ENCODE measurements at regions of chr10 and their contacts with region 1.

Region 1: DNA sequence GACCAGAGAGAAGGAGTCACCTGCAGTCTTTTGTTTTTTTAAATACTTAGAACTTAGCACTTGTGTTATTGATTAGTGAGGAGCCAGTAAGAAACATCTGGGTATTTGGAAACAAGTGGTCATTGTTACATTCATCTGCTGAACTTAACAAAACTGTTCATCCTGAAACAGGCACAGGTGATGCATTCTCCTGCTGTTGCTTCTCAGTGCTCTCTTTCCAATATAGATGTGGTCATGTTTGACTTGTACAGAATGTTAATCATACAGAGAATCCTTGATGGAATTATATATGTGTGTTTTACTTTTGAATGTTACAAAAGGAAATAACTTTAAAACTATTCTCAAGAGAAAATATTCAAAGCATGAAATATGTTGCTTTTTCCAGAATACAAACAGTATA is 13.5 kb downstream of the GHITM start:
- DNase-seq: no peak

Region 2: GRCh38 chr10:84205049-84205852 is 52.5 kb after region 1 on chr10:
- intact Hi-C with region 1: loop called (anchors 1 kb)
- DNase-seq: peak; percentile 60 to 97 (median 83)

Region 3: DNA sequence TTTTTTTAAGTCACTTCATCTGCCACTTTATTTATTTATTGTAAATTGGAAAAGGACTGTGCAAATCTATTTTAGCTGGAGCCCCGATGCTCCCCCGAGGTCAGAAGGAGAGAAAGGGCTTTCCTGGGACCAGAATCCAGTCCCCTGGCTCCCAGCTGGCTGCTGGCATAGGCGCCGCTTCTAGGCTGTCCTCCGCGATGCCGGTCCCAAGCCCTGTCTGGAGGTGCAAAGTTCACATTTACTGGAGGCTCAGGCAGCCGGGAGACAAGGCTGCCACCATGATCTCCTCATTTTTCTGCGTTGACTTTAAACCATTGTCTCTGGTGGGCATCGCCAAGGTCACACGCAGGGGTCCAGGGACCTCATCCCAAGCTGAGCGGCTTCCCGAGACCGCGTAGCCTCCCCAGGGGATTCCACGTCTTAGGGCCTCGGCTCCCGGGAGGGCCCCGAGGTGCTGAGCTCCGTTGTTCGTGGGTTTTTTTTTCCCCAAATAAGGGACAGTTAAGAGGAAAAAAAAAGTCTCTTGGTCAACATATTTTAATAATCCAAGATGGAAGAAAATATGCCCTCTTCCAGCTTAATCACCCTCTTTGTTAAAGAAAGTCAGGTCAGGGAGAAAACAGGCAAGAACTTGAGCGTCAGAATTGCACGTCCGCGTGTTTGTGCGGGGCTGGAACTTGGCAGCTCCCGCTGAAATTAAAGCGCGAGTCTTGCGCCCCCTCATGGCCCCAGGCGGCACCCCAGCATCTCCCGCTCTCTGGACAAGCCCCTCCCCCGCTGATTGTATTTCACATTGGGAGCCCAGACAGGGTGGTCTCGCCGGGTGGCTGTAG is 104.0 kb after region 1 on chr10:
- intact Hi-C with region 1: loop called (anchors 2 kb)
- DNase-seq: peak in 8 of 10 donors; percentile 55 to 95 (median 77)

Region 4: DNA sequence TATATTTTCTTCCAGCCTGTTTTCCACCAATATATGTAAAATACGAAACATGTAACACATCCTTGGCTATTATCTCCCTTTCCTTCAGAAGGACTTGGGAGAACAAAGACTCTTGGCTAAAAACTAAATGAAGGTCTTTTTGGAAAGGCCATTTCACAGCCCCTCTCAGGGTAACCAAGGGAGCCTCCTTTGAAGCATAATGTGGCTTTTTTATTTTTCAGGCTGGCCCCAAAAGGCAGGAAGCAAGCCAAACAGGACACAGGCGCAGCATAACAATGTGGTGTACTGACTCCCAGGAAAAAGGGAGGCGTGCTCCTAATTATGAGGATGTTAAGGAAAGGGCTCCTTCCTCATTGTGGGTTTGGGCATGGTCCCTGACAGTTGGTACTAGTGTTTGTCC is 145.3 kb after region 1 on chr10:
- intact Hi-C with region 1: no loop called
- DNase-seq: no peak